ENCODE measurements at regions of chr3 and their contacts with region 1.

Region 1: DNA sequence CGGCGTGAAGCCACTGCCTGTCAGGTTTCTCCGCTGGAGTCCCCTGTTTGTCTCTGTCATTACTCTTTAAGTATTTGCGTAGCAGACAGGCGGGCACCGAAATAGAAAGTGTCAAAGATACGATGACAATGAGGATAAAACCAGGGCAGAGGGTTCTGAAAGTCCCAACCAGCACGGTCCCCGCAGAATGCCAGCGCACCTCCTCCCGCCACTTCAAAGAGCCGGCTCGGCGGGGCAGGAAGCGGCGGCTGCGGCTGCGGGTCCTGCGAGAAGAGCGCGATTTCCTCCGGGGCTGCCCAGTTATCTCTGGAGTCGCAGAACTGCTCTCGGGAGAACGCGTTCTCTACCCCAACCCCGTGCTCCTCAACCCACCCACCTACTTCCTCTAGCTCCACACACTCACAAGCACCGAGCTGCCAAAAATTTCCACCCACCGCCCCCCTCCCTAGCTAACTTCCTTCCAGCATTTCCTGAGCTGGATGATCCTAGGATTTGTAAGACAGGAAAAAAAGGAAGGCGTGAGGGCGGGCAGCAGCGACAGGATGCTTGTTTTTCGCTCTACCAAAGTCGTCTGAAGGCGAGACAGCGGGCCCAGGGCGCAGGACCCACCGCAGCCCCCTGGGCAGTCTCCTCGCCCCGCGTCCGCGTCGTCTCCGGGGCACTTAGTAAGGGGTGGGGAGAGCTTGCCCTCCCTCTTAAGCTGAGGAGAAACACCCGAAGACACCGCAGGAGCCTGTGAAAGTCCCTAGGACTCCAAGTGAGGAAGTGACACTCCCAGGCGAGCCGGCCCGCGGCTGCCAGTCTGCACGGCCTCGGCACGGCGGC is at the start of gene ARHGAP31:
- DNase-seq: peak; percentile 86
- ATAC-seq: peak; percentile 75
- total RNA-seq, gene ARHGAP31: 42.1 TPM

Region 2: GRCh38 chr3:119322835-119323722 is 29.0 kb after region 1 on chr3:
- intact Hi-C with region 1: loop called (anchors 2 kb)
- DNase-seq: peak; percentile 92
- ATAC-seq: peak; percentile 91